ENCODE measurements at regions of chr3 and their contacts with region 1.

Region 1: GRCh38 chr3:158912188-158912587 is 110.3 kb downstream of the MFSD1 start:
- DNase-seq: no peak
- H3K4me3 Mint-ChIP-seq: no peak overlapping the region
- H3K27ac Mint-ChIP-seq: no peak overlapping the region
- H3K4me1 Mint-ChIP-seq: no peaks in the 10 kb centered on the region
- H3K27me3 Mint-ChIP-seq: peaks cover 31% of the 10 kb centered on the region
- CTCF ChIP-seq: no peak

Region 2: DNA sequence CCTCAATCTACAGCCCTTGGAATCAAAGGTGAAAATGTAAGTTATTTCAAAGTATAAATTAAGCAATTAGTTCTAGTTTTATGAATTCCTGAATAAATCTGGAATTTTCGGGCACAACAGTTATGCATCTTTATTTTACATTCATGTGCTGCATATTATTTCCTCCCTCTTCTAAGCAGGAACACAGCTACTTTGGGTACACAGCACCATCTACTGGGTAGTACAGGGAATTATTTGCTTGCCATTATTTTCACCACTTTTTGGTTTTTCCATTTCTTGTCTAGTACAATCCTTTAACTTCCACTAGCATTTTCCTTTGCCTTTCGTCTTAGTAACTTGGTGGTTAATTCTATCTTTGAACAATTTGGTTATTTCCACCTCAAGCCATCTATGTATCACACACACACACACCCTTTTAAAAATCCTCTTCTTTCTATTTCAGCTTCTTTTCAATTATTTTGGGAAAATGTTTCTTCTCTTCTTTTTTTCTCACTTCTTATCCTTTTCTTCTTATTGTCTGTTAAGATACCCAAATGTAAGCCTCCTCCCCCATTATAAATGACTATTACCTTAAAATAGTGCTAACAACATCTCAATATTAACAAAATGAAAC is 340.7 kb after region 1 on chr3:
- CTCF ChIA-PET with region 1: interaction called, 29 read pairs
- POLR2A ChIA-PET with region 1: no interaction called
- intact Hi-C with region 1: no loop called
- DNase-seq: peak; percentile 54
- H3K4me3 Mint-ChIP-seq: no peak overlapping the region
- H3K27ac Mint-ChIP-seq: no peak overlapping the region
- H3K4me1 Mint-ChIP-seq: no peaks in the 10 kb centered on the region
- H3K27me3 Mint-ChIP-seq: peaks cover 61% of the 10 kb centered on the region
- CTCF ChIP-seq: peak; percentile 76